ENCODE measurements at regions of chr11 and their contacts with region 1.

Region 1: DNA sequence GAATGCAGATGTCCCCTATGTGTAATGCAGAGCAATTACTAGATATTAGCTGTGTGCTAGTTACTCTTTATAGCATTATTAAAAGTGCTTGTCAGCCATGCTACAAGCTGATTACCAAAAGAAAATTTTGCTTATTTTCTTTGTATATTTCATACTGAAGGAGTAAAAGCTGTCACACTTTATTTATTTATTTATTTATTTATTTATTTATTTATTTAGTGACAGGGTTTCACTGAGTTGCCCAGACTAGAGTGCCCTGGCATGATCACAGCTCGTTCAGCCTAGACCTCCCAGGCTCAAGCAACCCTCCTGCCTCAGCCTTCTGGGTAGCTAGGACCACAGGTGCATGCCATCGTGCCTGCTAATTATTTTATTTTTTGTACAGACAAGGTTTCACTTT is 4.3 kb upstream of the MTNR1B start:
- DNase-seq: no peak
- H3K4me3 ChIP-seq: no peak overlapping the region
- H3K27ac ChIP-seq: no peak overlapping the region
- H3K4me1 ChIP-seq: no peaks in the 10 kb centered on the region
- H3K27me3 ChIP-seq: no peaks in the 10 kb centered on the region; the same call in 1 of the 2 replicates
- CTCF ChIP-seq: no peak

Region 2: GRCh38 chr11:93192163-93192562 is 227.0 kb after region 1 on chr11:
- CTCF ChIA-PET with region 1: no interaction called
- POLR2A ChIA-PET with region 1: no interaction called
- intact Hi-C with region 1: no loop called
- DNase-seq: no peak
- H3K4me3 ChIP-seq: no peak overlapping the region
- H3K27ac ChIP-seq: no peak overlapping the region
- H3K4me1 ChIP-seq: peaks cover 8% of the 10 kb centered on the region
- H3K27me3 ChIP-seq: no peaks in the 10 kb centered on the region
- CTCF ChIP-seq: no peak

Region 3: GRCh38 chr11:94134651-94135512 is 1169.7 kb after region 1 on chr11:
- CTCF ChIA-PET with region 1: no interaction called
- POLR2A ChIA-PET with region 1: interaction called, 11 read pairs
- intact Hi-C with region 1: no loop called
- DNase-seq: peak; percentile 24 to 65
- H3K4me3 ChIP-seq: peak overlapping the region; percentile 28; the same call in 1 of the 2 replicates
- H3K27ac ChIP-seq: peak overlapping the region; percentile 88
- H3K4me1 ChIP-seq: peaks cover 70% of the 10 kb centered on the region
- H3K27me3 ChIP-seq: no peaks in the 10 kb centered on the region
- CTCF ChIP-seq: no peak